ENCODE measurements at regions of chr7 and their contacts with region 1.

Region 1: GRCh38 chr7:152759949-152760853 is 649 bp downstream of the ACTR3B start:
- DNase-seq: peak in 1 of 3 donors; percentile 26
- H3K4me3 ChIP-seq: peak overlapping the region; percentile 40 to 83 (median 76)
- H3K4me3 Mint-ChIP-seq: peak overlapping the region; percentile 81 to 96
- H3K27ac ChIP-seq: peak overlapping the region; percentile 17 to 80
- H3K27ac Mint-ChIP-seq: peak overlapping the region in 5 of 7 donors; percentile 26 to 86 (median 62)
- H3K4me1 ChIP-seq: peaks cover 20 to 26% of the 10 kb centered on the region in 2 donors
- H3K4me1 Mint-ChIP-seq: peaks cover 22% of the 10 kb centered on the region
- H3K27me3 ChIP-seq: no peaks in the 10 kb centered on the region
- H3K27me3 Mint-ChIP-seq: no peaks in the 10 kb centered on the region
- CTCF ChIP-seq: no peak

Region 2: GRCh38 chr7:152675759-152676636 is 84.2 kb before region 1 on chr7 and contains the start of gene XRCC2:
- intact Hi-C with region 1: loop called (anchors 2 to 10 kb)
- DNase-seq: peak; percentile 85 to 87 (median 86)
- H3K4me3 ChIP-seq: peak within 1 kb of the TSS; percentile 73 to 88 (median 82)
- H3K4me3 Mint-ChIP-seq: peak within 1 kb of the TSS; percentile 91 to 97
- H3K27ac ChIP-seq: peak within 1 kb of the TSS; percentile 60 to 83
- H3K27ac Mint-ChIP-seq: peak within 1 kb of the TSS; percentile 91 to 98 (median 97)
- H3K4me1 ChIP-seq: peaks cover 12 to 22% of the 10 kb centered on the region in 2 donors
- H3K4me1 Mint-ChIP-seq: peaks cover 21% of the 10 kb centered on the region
- H3K27me3 ChIP-seq: no peaks in the 10 kb centered on the region
- H3K27me3 Mint-ChIP-seq: peaks cover 0 to 2% (median 1%) of the 10 kb centered on the region in 3 donors
- CTCF ChIP-seq: no peak
- polyA plus RNA-seq, gene XRCC2: 0.03 to 0.05 TPM in 2 of 3 donors, not detected in the other